Heart right ventricle (tissue), 16 donors: ENCODE measurements at regions of chr19 and their contacts with region 1.

Region 1: DNA sequence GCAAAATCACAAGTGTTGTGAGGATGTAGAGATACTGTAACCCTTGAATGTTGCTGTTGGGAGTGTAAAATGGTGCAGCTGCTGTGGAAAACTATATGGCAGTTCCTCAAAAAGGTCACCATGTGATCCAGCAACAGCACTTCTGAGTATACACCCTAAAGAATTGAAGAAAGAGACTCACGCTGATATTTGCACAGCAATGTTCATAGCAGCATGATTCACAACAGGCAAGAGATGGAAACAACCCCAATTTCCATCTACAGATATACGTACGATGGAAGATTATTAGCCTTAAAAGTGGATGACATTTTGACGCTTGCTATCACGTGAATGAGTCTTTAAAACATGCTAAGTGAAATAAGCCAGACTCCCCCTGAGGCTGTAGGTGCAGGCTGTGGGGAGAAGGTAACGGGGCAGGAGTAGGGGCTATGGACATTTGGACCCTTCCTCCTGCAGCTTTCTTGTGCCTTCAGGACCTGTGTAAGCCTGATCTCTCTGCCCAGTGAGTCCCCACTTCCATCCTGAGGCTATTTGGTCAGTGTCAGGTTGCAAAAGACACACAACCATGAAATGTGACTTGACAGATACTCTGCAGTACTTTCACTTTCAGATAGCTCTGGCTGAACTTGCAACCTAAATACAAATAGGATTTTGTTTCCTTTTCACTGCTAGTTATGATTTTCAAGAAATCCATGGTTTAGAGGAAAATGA is 17.6 kb upstream of the EID2 start:
- DNase-seq: no peak
- ATAC-seq: peak in 2 of 8 donors; percentile 18 to 38
- H3K4me3 ChIP-seq: no peak overlapping the region
- H3K27ac ChIP-seq: peak overlapping the region in 1 of 10 donors; percentile 52
- H3K4me1 ChIP-seq: peaks cover 0 to 28% (median 0%) of the 10 kb centered on the region in 9 donors
- H3K27me3 ChIP-seq: peaks cover 0 to 14% (median 0%) of the 10 kb centered on the region in 7 donors
- CTCF ChIP-seq: no peak

Region 2: DNA sequence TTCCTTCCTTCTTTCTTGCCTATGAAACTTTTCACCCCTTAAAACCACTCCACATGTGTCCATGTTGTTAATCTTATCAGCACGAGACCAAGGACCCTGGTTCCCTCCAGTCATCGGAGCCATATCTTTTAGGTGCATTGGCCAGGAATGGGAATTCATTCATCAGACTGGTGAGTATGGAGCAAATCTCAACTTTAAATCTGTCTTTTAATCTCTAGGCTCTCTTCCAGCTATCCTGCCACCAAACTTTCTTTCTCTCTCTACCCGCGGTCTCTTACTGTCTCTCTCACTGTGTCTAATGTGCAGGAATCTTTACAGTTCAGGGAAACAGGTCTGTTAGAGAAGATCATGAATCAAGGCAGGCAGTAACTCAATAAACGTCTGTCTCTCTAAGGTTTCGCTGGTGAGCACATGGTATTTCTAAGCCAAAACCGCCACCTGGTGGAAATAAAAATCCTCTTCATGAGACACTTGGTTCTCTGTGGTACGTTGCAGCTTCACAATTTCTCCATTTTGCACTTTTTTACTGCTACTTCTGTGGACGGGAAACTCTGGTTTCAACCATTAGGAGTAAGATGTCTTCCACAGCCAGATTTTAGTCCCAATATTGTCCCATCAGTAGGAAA is 114.3 kb after region 1 on chr19:
- intact Hi-C with region 1: loop called in 7 of 10 experiments (anchors 2 to 10 kb)
- DNase-seq: peak in 1 of 2 donors; percentile 26
- ATAC-seq: peak in 1 of 8 donors; percentile 56
- H3K4me3 ChIP-seq: no peak overlapping the region
- H3K27ac ChIP-seq: no peak overlapping the region
- H3K4me1 ChIP-seq: peaks cover 0 to 9% (median 0%) of the 10 kb centered on the region in 9 donors
- H3K27me3 ChIP-seq: peaks cover 0 to 24% (median 10%) of the 10 kb centered on the region in 7 donors
- CTCF ChIP-seq: peak; percentile 20 to 66 (median 49)

Region 3: DNA sequence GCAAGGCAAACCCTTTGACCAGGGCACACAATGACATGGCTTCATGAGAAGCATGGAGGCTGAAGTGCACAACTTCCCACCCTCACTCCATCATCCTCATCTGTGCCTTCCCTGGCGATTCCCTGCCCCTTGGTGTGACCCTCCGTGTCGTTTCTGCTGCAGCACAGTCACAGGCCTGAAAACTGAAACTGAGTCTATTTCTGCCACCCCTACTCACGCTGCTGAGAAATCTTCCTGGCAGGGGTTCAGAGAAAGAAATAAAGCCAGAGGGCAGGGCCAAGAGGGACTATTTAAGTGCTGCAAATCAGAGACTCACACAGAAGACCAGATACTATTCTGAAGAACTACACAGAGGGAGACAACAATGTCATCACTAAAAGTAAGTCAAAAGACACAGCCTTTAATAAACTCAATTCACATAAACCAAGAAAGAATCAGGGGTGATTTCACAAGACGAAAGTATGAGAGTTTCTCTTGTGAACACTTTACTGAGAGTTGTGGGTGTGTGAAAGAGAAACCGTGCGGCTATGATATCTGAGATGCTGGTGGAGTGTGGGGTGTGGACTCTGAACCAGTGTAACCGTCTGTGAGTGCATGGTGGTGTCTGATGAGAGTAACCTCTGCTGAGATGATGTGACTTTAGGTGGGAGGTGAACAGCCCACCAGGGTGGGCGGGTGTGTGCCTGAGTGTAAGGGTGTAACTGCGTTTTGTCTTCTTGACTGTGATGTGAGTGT is 121.6 kb after region 1 on chr19:
- intact Hi-C with region 1: loop called in 5 of 10 experiments (anchors 5 to 10 kb)
- DNase-seq: peak in 1 of 2 donors; percentile 8
- ATAC-seq: peak in 7 of 8 donors; percentile 12 to 88 (median 64)
- H3K4me3 ChIP-seq: peak overlapping the region in 1 of 10 donors; percentile 31
- H3K27ac ChIP-seq: peak overlapping the region in 4 of 10 donors; percentile 10 to 70 (median 32)
- H3K4me1 ChIP-seq: peaks cover 0 to 34% (median 18%) of the 10 kb centered on the region in 9 donors
- H3K27me3 ChIP-seq: no peaks in the 10 kb centered on the region
- CTCF ChIP-seq: no peak

Region 4: DNA sequence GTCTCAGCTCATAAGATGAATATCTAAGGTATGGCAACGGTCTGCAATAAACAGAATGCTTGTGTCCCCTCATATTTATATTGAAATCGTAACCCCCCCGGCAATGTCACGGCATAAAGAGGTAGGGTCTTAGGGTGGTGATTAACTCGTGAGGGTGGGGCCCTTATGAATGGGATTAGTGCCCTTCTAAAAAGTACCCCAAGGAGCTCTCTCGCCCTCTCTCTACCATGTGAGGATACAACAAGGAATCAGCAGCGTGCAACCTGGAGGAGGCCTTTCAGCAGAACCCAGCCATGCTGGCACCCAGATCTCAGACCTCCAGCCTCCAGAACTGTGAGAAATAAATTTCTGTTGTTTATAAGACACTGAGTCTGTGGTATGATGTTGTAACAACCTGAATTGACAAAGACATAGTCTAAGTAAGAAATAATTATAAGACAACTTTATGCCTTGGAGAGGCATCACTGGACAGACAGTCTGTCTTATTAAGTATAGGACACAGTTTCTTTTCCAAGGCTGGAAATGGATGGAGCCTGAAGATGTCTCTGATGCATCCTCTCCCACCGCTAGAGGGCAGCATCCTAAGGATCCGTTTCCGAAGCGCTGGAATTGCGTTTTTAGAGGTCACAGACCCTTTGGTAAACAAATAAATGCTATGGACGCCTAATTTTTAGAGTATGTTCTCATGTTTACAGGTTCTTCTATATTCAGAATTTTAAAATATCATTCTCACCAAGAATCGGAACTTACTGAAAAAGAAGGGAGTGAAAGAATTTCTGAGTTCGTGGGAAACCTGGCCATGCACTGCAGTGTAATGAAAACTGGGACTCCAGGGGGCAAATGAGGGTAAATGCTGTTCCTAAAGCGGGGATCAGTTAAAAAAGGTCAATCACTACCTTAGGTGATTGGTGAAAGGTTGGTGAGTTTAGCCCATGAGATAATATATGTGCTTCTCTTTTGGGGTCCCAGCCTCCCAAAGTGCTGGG is 207.8 kb after region 1 on chr19:
- intact Hi-C with region 1: loop called in 3 of 10 experiments (anchors 5 to 10 kb)
- DNase-seq: peak in 1 of 2 donors; percentile 22
- ATAC-seq: no peak
- H3K4me3 ChIP-seq: no peak overlapping the region
- H3K27ac ChIP-seq: no peak overlapping the region
- H3K4me1 ChIP-seq: no peaks in the 10 kb centered on the region
- H3K27me3 ChIP-seq: peaks cover 0 to 29% (median 13%) of the 10 kb centered on the region in 7 donors
- CTCF ChIP-seq: peak; percentile 38 to 81 (median 65)

Region 5: DNA sequence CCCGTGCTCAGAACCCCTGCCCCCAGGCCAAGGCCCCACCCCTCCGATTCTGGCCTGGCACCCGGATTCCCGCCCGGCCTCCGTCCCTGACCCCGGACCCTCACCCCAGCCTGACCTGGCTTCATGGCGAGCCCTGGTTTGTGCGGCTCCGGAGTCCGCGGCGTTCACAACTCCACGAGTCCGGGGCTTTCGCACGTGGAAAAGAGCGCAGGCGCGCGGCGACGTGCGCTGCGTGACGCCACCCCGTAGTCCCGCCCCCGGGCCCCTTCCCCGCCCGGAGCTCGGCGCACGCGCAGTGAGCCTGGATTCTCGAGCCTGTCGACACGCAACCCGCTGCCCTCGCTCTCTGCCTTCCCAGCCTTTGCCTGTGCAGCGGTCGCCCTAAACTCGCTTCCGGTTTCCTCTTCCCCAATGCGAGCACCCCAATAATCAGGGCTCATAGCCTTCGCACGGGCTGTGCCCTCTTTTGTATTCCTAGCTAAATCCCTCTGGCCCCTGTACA is 288.6 kb after region 1 on chr19 and contains the start of gene FBL:
- intact Hi-C with region 1: loop called in 2 of 10 experiments (anchors 5 kb)
- DNase-seq: peak; percentile 94 to 99
- ATAC-seq: peak; percentile 97 to 99 (median 98)
- H3K4me3 ChIP-seq: peak within 1 kb of the TSS; percentile 53 to 97 (median 78)
- H3K27ac ChIP-seq: peak within 1 kb of the TSS; percentile 49 to 91 (median 84)
- H3K4me1 ChIP-seq: peaks cover 4 to 54% (median 46%) of the 10 kb centered on the region in 9 donors
- H3K27me3 ChIP-seq: no peaks in the 10 kb centered on the region
- CTCF ChIP-seq: no peak
- total RNA-seq, gene FBL: 52.7 to 95.4 (median 67.4) TPM

Region 6: GRCh38 chr19:39858541-39858940 is 300.9 kb after region 1 on chr19:
- intact Hi-C with region 1: no loop called
- DNase-seq: no peak
- ATAC-seq: no peak
- H3K4me3 ChIP-seq: no peak overlapping the region
- H3K27ac ChIP-seq: no peak overlapping the region
- H3K4me1 ChIP-seq: no peaks in the 10 kb centered on the region
- H3K27me3 ChIP-seq: peaks cover 0 to 7% (median 0%) of the 10 kb centered on the region in 7 donors
- CTCF ChIP-seq: no peak